ENCODE measurements at regions of chr19 and their contacts with region 1.

Region 1: GRCh38 chr19:45670670-45671453 is 2.8 kb downstream of the GIPR start:
- DNase-seq: peak; percentile 91
- H3K4me3 ChIP-seq: peak overlapping the region; percentile 47
- H3K27ac ChIP-seq: no peak overlapping the region
- H3K4me1 ChIP-seq: peaks cover 52% of the 10 kb centered on the region
- CTCF ChIP-seq: no peak

Region 2: DNA sequence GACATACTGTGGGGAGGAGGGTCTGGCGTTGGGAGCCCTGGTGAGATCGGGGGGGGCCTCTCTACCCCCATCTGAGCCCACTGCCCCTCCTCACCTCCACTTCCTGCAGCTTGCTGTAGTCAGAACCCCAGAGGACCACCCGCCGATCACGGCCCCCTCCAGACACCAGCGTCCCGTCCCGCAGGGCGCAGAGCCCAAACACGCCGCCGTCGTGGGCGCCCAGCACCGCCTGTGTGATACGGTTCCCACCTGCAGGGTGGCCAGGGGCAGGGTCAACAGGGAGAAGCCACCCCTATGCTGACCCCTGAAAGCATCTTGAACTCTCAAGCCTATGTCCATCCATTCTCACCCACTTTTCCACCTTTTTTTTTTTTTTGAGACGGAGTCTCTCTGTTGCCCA is 49.5 kb before region 1 on chr19:
- CTCF ChIA-PET with region 1: no interaction called
- POLR2A ChIA-PET with region 1: no interaction called
- intact Hi-C with region 1: no loop called
- DNase-seq: no peak
- H3K4me3 ChIP-seq: no peak overlapping the region
- H3K27ac ChIP-seq: no peak overlapping the region
- H3K4me1 ChIP-seq: peaks cover 2% of the 10 kb centered on the region
- CTCF ChIP-seq: no peak

Region 3: GRCh38 chr19:45705115-45705514 is 34.3 kb after region 1 on chr19:
- CTCF ChIA-PET with region 1: no interaction called
- POLR2A ChIA-PET with region 1: no interaction called
- intact Hi-C with region 1: loop called (anchors 1 kb)
- DNase-seq: no peak
- H3K4me3 ChIP-seq: no peak overlapping the region
- H3K27ac ChIP-seq: peak overlapping the region; percentile 43
- H3K4me1 ChIP-seq: peaks cover 48% of the 10 kb centered on the region
- CTCF ChIP-seq: no peak

Region 4: GRCh38 chr19:45730389-45731288 is 59.8 kb after region 1 on chr19 and contains the start of gene FBXO46:
- CTCF ChIA-PET with region 1: no interaction called
- POLR2A ChIA-PET with region 1: no interaction called
- intact Hi-C with region 1: no loop called
- DNase-seq: peak; percentile 99
- H3K4me3 ChIP-seq: peak within 1 kb of the TSS; percentile 97
- H3K27ac ChIP-seq: peak within 1 kb of the TSS; percentile 36
- H3K4me1 ChIP-seq: peaks cover 11% of the 10 kb centered on the region
- CTCF ChIP-seq: peak; percentile 68
- total RNA-seq, gene FBXO46: 23.9 and 27.5 TPM in 2 replicates